ENCODE measurements at regions of chr1 and their contacts with region 1.

Region 1: GRCh38 chr1:17494114-17494729 is 45.3 kb upstream of the ARHGEF10L start:
- DNase-seq: peak; percentile 42 to 94 (median 70)

Region 2: DNA sequence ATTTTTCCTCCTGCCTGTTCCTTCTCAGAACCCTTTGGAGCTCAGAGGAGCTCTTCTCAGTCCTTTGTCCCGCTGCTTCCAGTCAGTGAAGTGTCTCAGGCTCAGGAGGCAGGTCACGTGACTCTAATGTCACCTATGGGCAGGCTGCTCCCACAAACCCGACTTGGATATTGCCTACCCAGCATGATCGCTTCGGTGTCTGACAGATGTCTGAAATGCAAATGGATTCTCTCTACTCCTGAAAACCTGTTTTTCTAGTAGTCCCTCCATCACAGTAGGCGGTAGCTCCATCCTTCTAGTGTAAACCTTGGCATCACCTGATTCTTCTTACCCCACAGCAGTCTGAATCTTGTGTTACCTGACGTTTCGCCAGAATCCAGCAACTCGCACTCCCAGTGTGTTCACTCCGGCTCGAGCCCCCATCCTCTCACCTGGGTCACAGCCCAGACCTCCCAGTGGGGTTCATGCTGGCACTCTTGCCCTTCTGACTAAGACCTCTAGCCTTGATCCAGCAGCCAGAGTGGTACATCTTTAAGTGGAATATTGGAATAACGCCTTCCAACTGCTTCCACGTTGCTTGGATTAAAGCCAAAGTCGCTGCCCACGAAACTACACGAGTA is 116.8 kb before region 1 on chr1:
- intact Hi-C with region 1: no loop called
- DNase-seq: no peak

Region 3: GRCh38 chr1:18581420-18581880 is 1087.2 kb after region 1 on chr1:
- intact Hi-C with region 1: loop called (anchors 10 kb)
- DNase-seq: peak; percentile 21 to 90 (median 50)